Activated naive CD4-positive, alpha-beta T cell treated with anti-CD3 and anti-CD28 coated beads, Interleukin-2, amount 10 ng/mL, durations not matched to agents 7 days and 5 days (primary cell): ENCODE measurements at regions of chr1 and their contacts with region 1.

Region 1: GRCh38 chr1:171313835-171314320 is at the start of gene FMO4:
- DNase-seq: peak; percentile 91
- H3K4me3 Mint-ChIP-seq: peak within 1 kb of the TSS; percentile 73
- H3K27ac Mint-ChIP-seq: peak within 1 kb of the TSS; percentile 86
- H3K4me1 Mint-ChIP-seq: peaks cover 14% of the 10 kb centered on the region
- H3K27me3 Mint-ChIP-seq: no peaks in the 10 kb centered on the region

Region 2: GRCh38 chr1:170967042-170967910 is 346.6 kb before region 1 on chr1:
- CTCF ChIA-PET with region 1: interaction called, 30 read pairs
- DNase-seq: no peak
- H3K4me3 Mint-ChIP-seq: no peak overlapping the region
- H3K27ac Mint-ChIP-seq: no peak overlapping the region
- H3K4me1 Mint-ChIP-seq: no peaks in the 10 kb centered on the region
- H3K27me3 Mint-ChIP-seq: no peaks in the 10 kb centered on the region

Region 3: GRCh38 chr1:171081314-171081753 is 232.5 kb before region 1 on chr1:
- CTCF ChIA-PET with region 1: interaction called, 10 read pairs
- DNase-seq: no peak
- H3K4me3 Mint-ChIP-seq: no peak overlapping the region
- H3K27ac Mint-ChIP-seq: no peak overlapping the region
- H3K4me1 Mint-ChIP-seq: no peaks in the 10 kb centered on the region
- H3K27me3 Mint-ChIP-seq: no peaks in the 10 kb centered on the region

Region 4: DNA sequence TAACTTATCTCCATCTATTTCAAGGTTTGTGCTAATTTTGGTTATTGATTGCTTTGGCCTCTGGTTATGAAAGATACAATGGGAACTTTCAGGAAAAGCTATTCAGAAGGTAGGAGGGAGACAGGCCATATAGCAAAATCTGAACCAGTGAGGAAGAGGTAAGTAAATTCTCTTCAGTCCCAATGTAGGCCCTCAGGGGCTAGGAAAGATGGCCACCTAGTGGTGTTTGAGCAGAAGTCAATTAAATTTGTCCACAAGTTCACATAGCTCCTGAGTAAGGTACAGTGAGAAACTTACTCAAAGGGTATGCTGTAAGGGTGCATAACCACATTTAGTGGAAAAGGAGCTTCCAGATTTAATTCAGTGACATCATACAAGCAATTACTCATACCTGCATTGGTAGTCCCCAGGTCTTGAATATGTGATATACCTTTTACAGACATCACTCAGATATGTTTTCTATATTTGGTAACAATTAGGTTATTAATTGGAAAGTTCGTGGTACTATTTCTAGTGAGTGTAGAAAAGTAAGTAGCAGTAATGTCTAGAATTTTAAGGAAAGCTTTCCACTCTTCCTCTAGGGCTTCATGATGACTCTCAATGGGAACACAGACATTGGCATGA is 87.0 kb before region 1 on chr1:
- CTCF ChIA-PET with region 1: interaction called, 11 read pairs
- DNase-seq: no peak
- H3K4me3 Mint-ChIP-seq: no peak overlapping the region
- H3K27ac Mint-ChIP-seq: no peak overlapping the region
- H3K4me1 Mint-ChIP-seq: peaks cover under 1% of the 10 kb centered on the region
- H3K27me3 Mint-ChIP-seq: peaks cover 4% of the 10 kb centered on the region

Region 5: DNA sequence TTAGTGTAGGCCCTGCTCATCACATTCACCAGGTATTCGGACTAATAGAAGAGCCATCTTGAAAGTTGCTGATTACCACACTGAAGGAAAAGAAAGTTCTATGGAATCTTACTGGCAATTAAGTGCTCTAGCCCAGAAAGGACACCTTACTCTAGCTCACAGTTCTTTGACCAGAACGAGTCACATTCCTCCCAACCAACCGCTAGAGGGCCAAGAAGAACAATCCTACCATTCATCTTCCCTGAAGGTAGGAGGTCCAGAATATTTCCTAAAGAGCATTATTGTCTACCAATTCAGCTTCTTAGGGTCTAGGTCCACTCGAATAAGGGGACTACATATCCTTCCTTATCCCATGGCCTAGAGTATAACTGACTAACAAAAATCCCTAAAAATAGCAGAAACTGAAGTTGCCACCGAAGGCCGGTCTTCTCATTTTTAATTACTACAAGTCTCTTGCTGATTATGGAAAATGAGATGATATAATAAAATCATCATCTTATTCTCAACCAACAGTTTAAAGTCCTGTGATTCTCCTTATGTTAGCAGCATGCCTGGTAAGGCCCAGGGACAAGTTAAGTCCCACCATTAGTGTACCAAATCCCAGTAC is 68.3 kb before region 1 on chr1:
- CTCF ChIA-PET with region 1: interaction called, 74 read pairs
- DNase-seq: no peak
- H3K4me3 Mint-ChIP-seq: no peak overlapping the region
- H3K27ac Mint-ChIP-seq: no peak overlapping the region
- H3K4me1 Mint-ChIP-seq: no peaks in the 10 kb centered on the region
- H3K27me3 Mint-ChIP-seq: peaks cover 28% of the 10 kb centered on the region

Region 6: DNA sequence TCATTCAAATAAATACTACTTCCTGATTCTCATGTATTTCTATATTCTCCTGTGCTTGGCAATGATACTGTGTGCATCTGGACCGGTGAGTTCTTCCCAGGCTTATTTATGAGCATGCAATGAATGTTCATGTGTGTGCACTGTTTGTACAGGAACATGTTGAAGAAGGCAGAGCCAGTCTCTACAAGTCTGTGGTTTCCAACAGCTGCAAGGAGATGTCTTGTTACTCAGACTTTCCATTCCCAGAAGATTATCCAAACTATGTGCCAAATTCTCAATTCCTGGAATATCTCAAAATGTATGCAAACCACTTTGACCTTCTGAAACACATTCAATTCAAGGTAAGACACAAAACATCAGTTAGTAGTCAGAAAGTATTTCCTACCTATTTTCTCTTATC is 46.5 kb before region 1 on chr1:
- CTCF ChIA-PET with region 1: no interaction called
- DNase-seq: no peak
- H3K4me3 Mint-ChIP-seq: no peak overlapping the region
- H3K27ac Mint-ChIP-seq: no peak overlapping the region
- H3K4me1 Mint-ChIP-seq: no peaks in the 10 kb centered on the region
- H3K27me3 Mint-ChIP-seq: peaks cover 9% of the 10 kb centered on the region

Region 7: GRCh38 chr1:171296897-171297296 is 17.0 kb before region 1 on chr1:
- CTCF ChIA-PET with region 1: interaction called, 13 read pairs
- DNase-seq: no peak
- H3K4me3 Mint-ChIP-seq: no peak overlapping the region
- H3K27ac Mint-ChIP-seq: no peak overlapping the region
- H3K4me1 Mint-ChIP-seq: no peaks in the 10 kb centered on the region
- H3K27me3 Mint-ChIP-seq: peaks cover 9% of the 10 kb centered on the region